Cardiac septum (tissue), 1 donor: ENCODE measurements at regions of chr20 and their contacts with region 1.

Region 1: DNA sequence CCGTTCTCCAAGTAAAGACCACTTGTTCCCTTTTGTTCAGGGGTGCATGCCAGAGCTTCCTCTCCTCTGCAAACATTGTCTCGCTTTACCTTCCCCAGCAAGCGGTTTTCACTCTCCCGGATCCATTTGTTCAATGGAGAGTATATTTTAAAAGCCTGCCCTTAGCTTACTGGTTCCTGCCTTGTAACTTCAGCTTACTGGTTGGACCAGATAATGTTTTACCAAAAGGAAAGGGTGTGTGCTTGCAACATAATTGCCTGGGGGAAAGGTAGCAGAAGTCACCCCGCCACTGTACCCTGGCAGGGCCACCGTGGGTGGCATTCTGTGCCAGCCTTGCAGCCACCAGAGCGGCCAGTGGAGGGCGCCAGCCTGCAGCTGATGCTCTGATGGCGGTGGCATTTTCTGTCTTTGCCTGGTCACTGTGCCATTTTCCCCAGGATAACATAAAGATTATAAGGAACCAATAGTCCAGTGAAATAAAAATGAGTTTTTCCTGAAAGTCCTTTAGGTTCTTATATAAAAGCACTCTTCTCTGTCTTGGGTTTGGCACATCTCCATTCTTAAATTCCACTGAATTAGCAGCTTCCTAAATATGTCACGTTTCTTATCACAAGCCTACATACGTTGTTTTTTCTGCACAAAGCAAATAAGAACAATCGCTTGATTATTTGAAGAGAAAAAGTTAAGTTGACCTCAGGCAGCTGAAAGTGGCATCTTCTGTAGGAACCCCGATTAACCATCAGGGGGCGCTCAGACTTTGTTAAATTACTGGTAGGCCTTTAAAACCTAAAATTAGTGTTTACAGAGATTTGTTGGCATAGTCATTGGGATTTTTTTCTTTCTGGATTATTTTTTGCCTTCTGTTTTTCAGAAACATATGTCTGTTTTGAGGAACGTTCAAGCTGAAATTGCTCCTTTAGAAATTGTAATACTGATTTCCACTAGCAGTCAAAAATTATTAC is 67.4 kb upstream of the XRN2 start:
- DNase-seq: no peak

Region 2: GRCh38 chr20:20860078-20860806 is 375.5 kb before region 1 on chr20:
- intact Hi-C with region 1: loop called (anchors 10 kb)
- DNase-seq: peak; percentile 93

Region 3: DNA sequence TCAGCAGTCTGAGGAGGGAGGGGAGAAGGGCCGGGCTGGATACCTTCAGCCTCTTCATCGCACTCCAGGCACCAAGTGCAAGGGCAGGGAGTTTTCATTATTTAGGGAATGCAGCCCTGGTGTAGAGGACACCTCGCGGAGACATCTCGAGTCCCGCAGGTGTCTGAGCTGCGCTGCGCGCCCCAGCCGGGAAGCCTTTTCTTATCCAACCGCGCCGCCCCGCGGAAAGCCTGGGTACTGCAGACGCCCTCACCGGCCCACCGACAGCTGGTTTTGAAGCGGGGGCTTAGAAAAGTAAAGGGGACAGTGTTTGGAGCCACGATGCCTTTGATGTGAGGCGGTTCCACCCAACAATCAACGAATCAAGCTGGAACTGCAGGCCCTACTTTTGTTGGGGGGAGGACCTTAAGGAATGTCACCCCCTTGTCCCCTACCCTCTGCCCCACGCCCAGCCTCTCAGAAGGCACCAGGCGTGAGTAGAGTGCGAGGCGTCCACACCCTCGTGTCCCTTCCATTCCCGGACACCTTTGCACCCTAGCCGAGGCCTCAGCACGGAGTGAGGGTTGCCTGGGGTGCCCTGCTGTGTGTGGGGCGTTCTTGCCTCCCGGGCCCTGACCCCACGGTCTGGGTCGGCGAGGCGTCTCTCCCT is 269.5 kb after region 1 on chr20:
- intact Hi-C with region 1: loop called (anchors 1 kb)
- DNase-seq: peak; percentile 86

Region 4: GRCh38 chr20:21571841-21572690 is 336.3 kb after region 1 on chr20:
- intact Hi-C with region 1: loop called (anchors 5 kb)
- DNase-seq: no peak

Region 5: GRCh38 chr20:21615617-21616080 is 379.9 kb after region 1 on chr20:
- intact Hi-C with region 1: loop called (anchors 5 kb)
- DNase-seq: no peak